ENCODE measurements at regions of chr3 and their contacts with region 1.

Region 1: GRCh38 chr3:108153451-108153981 is 62.7 kb upstream of the CD47 start:
- DNase-seq: peak; percentile 79
- ATAC-seq: peak; percentile 87
- H3K4me3 Mint-ChIP-seq: no peak overlapping the region
- H3K27ac Mint-ChIP-seq: no peak overlapping the region
- H3K4me1 Mint-ChIP-seq: peaks cover 12% of the 10 kb centered on the region
- H3K27me3 Mint-ChIP-seq: no peaks in the 10 kb centered on the region

Region 2: DNA sequence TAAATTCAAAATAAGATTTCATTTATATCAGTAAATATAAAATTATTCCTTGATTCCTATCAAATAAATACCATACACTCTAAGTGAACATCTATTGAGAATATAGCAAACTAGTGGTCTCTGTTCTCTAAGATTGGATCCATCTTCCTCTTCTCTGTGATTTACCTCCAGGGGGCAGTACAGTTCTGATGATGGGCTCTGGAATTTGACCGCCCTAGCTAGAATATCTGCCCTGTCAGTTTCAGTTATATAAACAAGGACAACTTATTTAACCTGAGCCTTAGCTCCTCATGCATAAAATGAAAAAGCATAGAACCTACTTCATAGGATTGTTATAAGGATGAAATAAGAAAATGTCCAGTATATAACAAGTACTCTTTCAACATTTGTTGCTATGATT is 947.4 kb before region 1 on chr3:
- CTCF ChIA-PET with region 1: no interaction called
- POLR2A ChIA-PET with region 1: no interaction called
- intact Hi-C with region 1: no loop called
- DNase-seq: peak; percentile 8
- ATAC-seq: no peak
- H3K4me3 Mint-ChIP-seq: no peak overlapping the region
- H3K27ac Mint-ChIP-seq: no peak overlapping the region
- H3K4me1 Mint-ChIP-seq: no peaks in the 10 kb centered on the region
- H3K27me3 Mint-ChIP-seq: peaks cover 7% of the 10 kb centered on the region

Region 3: GRCh38 chr3:107892955-107893624 is 260.4 kb before region 1 on chr3:
- CTCF ChIA-PET with region 1: no interaction called
- POLR2A ChIA-PET with region 1: no interaction called
- intact Hi-C with region 1: no loop called
- DNase-seq: no peak
- ATAC-seq: no peak
- H3K4me3 Mint-ChIP-seq: no peak overlapping the region
- H3K27ac Mint-ChIP-seq: no peak overlapping the region
- H3K4me1 Mint-ChIP-seq: no peaks in the 10 kb centered on the region
- H3K27me3 Mint-ChIP-seq: peaks cover 24% of the 10 kb centered on the region

Region 4: DNA sequence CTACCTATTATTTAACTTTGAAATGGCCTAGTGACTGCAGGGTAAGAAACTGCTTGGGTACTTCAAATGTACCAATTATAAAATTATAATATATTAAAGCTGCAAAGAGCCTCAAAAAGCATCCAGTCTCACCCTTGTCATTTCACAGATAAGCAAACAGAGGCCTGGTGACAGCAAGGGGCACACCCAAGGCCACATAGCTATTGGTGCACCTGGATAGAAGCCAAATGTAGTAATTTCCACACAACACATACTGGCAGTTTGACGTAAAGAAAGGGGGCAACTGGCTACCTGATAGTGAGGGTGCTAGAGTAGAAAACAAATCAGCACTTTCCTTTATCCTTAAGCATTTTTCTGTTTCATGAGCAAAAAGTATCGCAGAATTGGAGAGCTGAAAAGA is 17.6 kb after region 1 on chr3:
- CTCF ChIA-PET with region 1: interaction called, 10 read pairs
- POLR2A ChIA-PET with region 1: no interaction called
- intact Hi-C with region 1: no loop called
- DNase-seq: no peak
- ATAC-seq: no peak
- H3K4me3 Mint-ChIP-seq: no peak overlapping the region
- H3K27ac Mint-ChIP-seq: no peak overlapping the region
- H3K4me1 Mint-ChIP-seq: peaks cover 19% of the 10 kb centered on the region
- H3K27me3 Mint-ChIP-seq: no peaks in the 10 kb centered on the region

Region 5: GRCh38 chr3:108319428-108320082 is 166.0 kb after region 1 on chr3:
- CTCF ChIA-PET with region 1: interaction called, 7 read pairs
- POLR2A ChIA-PET with region 1: no interaction called
- intact Hi-C with region 1: loop called in 1 of 2 experiments (anchors 5 kb)
- DNase-seq: no peak
- ATAC-seq: no peak
- H3K4me3 Mint-ChIP-seq: no peak overlapping the region
- H3K27ac Mint-ChIP-seq: no peak overlapping the region
- H3K4me1 Mint-ChIP-seq: peaks cover 12% of the 10 kb centered on the region
- H3K27me3 Mint-ChIP-seq: no peaks in the 10 kb centered on the region

Region 6: DNA sequence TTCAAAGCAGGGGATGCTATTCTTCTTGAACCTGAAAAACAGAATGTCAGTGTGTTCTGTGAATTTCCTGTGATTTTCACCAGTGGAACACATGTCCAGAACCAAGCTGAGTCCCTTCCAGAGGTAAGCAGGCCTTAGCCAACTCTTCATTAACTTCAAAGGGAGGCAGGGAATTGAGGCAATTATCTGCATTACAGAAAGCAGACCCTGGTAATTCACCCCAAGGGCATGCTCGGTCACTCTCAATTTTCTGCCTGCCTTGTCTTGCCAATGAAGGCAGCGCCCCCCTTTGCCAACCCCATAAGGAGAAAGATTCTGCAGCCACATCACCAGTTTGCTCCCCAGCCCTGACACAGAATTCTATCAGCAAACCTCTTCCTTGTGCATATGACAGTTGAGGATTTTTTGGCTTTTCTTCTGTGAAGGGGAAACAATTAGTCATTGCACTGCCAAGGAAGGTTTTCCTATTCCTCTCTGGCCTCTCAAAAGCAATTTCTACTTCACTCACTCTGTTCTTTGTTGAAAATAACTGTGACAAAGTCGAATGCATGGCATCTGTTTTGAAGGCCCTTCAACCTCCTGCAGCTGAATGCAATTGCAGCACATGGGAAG is 228.1 kb after region 1 on chr3:
- CTCF ChIA-PET with region 1: no interaction called
- POLR2A ChIA-PET with region 1: no interaction called
- intact Hi-C with region 1: no loop called
- DNase-seq: no peak
- ATAC-seq: no peak
- H3K4me3 Mint-ChIP-seq: no peak overlapping the region
- H3K27ac Mint-ChIP-seq: no peak overlapping the region
- H3K4me1 Mint-ChIP-seq: peaks cover 5% of the 10 kb centered on the region
- H3K27me3 Mint-ChIP-seq: peaks cover 4% of the 10 kb centered on the region

Region 7: DNA sequence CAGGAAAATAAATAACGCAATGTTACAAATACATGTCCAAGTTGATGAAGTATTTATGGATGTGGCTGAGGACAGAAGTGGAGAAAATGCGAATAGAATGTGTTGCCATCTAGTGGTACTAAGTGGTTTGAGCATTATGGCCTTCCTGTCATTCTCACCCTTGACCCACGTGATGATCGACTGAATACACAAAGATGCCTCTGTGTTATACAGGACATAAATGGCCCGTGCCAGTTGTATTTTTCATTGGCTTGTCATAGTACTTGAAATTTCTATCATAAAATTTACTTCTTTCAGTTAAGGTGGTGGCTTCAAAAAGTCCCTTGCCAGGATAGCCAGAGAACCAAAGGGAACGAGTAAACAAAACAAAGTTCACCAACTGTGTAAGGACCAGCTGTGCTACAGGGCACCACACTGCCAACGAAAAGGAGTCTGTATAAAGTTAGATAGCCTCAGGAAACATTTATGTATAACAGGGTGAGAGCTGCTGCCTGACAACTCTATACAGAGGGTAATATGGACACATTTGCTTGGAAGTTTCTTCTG is 253.2 kb after region 1 on chr3:
- CTCF ChIA-PET with region 1: interaction called, 14 read pairs
- POLR2A ChIA-PET with region 1: no interaction called
- intact Hi-C with region 1: loop called (anchors 1 to 2 kb)
- DNase-seq: peak; percentile 35
- ATAC-seq: peak; percentile 96
- H3K4me3 Mint-ChIP-seq: no peak overlapping the region
- H3K27ac Mint-ChIP-seq: no peak overlapping the region
- H3K4me1 Mint-ChIP-seq: peaks cover 10% of the 10 kb centered on the region
- H3K27me3 Mint-ChIP-seq: no peaks in the 10 kb centered on the region

Region 8: DNA sequence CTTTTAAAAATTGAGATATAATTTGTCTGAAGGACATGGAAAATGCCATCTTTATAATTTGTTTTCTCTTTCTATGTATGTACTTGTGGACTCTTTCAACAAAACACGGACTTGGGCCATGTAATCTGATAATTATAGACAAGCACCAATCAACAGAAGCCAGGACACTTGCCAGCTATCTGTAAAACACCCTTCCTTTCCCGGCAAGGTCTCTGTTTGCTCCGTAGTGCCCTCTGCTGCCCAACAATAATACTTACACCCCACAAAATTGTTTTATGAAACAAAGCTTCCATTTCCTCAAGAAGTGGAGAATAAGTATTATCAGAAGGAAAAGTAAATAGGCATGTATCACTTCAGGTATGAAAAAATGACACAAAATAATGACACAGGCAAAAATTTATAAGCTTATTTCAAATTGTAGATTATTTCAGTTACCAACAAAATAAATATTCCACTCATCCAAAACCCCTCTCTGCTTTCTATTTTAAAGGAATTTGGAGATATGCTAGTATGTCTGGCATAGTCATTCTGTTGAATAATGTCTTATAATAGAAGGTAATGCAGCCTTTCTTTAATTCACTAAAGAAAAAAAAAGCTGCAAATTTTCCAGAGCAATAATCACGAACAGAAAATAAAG is 324.1 kb after region 1 on chr3:
- CTCF ChIA-PET with region 1: interaction called, 18 read pairs
- POLR2A ChIA-PET with region 1: no interaction called
- intact Hi-C with region 1: loop called (anchors 1 kb)
- DNase-seq: peak; percentile 78
- ATAC-seq: peak; percentile 79
- H3K4me3 Mint-ChIP-seq: no peak overlapping the region
- H3K27ac Mint-ChIP-seq: no peak overlapping the region
- H3K4me1 Mint-ChIP-seq: no peaks in the 10 kb centered on the region
- H3K27me3 Mint-ChIP-seq: peaks cover 2% of the 10 kb centered on the region

Measured in activated CD4-positive, alpha-beta T cell treated with anti-CD3 and anti-CD28 coated beads for 36 hours (primary cell).